Head of caudate nucleus (tissue), 42 donors: ENCODE measurements at regions of chr5 and their contacts with region 1.

Region 1: DNA sequence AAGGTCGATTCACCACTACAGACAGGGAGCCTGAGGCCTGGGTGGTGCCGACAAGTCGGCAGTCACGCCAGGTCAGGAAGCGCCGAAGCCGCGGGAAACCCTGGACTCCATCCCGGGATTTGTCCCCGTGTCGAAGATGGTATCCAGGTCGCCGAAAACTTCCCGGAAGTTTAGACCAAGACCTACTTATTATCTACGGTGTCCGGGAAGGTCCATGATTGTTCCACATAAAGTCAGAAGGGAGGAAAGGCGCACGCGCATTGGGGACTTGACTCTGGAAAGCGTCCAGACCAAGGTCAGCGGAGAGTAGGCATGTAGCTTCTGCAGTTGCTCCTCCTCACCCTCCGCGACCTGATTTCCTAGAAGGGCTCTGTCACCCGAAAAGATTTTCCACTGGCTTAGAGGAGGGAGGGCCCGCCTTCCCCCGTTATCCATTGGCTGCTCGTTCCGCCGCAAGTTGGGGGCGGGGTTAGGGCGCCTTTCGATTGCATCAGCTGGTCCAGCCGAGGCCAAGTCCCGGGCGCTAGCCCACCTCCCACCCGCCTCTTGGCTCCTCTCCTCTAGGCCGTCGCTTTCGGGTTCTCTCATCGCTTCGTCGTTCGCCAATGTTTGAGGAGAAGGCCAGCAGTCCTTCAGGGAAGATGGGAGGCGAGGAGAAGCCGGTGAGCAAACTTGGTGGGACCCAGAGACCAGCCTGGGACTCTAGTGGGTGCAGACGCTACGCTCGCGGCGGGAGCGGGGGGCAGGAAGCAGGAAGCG is at the start of gene TARS1:
- DNase-seq: peak; percentile 87 to 99 (median 97)

Region 2: GRCh38 chr5:33936004-33936380 is 495.3 kb after region 1 on chr5:
- intact Hi-C with region 1: loop called (anchors 10 kb)
- DNase-seq: peak; percentile 9 to 81 (median 60)

Region 3: GRCh38 chr5:34007621-34008600 is 567.2 kb after region 1 on chr5 and contains the start of gene AMACR:
- intact Hi-C with region 1: loop called (anchors 5 kb)
- DNase-seq: peak; percentile 78 to 96 (median 94)